Psoas muscle (tissue), 8 donors: ENCODE measurements at regions of chr12 and their contacts with region 1.

Region 1: GRCh38 chr12:56803750-56804149 is 40.6 kb downstream of the HSD17B6 start:
- DNase-seq: peak; percentile 20 to 61
- ATAC-seq: peak; percentile 74 to 99 (median 88)
- H3K4me3 ChIP-seq: no peak overlapping the region
- H3K27ac ChIP-seq: no peak overlapping the region
- H3K4me1 ChIP-seq: no peaks in the 10 kb centered on the region
- H3K27me3 ChIP-seq: no peaks in the 10 kb centered on the region
- CTCF ChIP-seq: no peak

Region 2: GRCh38 chr12:56914724-56915123 is 111.0 kb after region 1 on chr12:
- intact Hi-C with region 1: loop called in 1 of 2 experiments (anchors 10 kb)
- DNase-seq: no peak
- ATAC-seq: no peak
- H3K4me3 ChIP-seq: no peak overlapping the region
- H3K27ac ChIP-seq: no peak overlapping the region
- H3K4me1 ChIP-seq: no peaks in the 10 kb centered on the region
- H3K27me3 ChIP-seq: no peaks in the 10 kb centered on the region
- CTCF ChIP-seq: no peak

Region 3: GRCh38 chr12:57031138-57031725 is 227.5 kb after region 1 on chr12:
- intact Hi-C with region 1: no loop called
- DNase-seq: no peak
- ATAC-seq: no peak
- H3K4me3 ChIP-seq: no peak overlapping the region
- H3K27ac ChIP-seq: no peak overlapping the region
- H3K4me1 ChIP-seq: no peaks in the 10 kb centered on the region
- H3K27me3 ChIP-seq: peaks cover 0 to 4% (median 0%) of the 10 kb centered on the region in 3 donors
- CTCF ChIP-seq: no peak